ENCODE measurements at regions of chr2 and their contacts with region 1.

Region 1: DNA sequence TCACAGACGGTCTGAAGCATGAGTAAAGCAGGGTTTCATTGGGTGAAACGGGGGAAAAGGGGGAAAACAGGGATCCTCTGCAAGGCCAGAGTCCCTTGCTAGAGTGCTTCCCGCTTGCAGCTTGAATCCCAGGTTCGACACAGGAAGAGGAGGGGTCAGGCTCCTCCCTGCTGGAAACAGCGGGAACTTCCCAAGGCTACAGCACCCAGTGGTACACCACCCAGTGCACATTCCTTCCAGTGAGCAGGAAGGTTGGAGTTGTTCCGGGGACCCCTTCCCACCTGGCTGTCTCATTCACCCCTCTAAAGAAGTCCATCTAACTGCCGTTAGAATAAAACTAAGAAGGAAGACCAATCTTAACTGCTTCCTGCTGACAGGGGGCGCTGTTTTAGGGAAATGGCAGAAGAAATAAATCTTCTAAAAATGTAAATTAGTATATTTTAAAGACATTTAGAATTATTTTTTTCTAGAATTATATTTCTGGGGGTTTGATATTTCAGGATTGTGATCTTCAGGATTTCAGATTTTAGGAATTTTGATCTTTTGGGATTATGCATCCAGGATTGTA is 230.9 kb downstream of the RBM43 start:
- DNase-seq: peak; percentile 19
- ATAC-seq: no peak
- H3K4me3 Mint-ChIP-seq: no peak overlapping the region
- H3K27ac Mint-ChIP-seq: no peak overlapping the region
- H3K4me1 Mint-ChIP-seq: peaks cover 4% of the 10 kb centered on the region
- H3K27me3 Mint-ChIP-seq: peaks cover 11% of the 10 kb centered on the region
- CTCF ChIP-seq: peak; percentile 54

Region 2: GRCh38 chr2:150938527-150938926 is 92.2 kb before region 1 on chr2:
- CTCF ChIA-PET with region 1: no interaction called
- POLR2A ChIA-PET with region 1: no interaction called
- intact Hi-C with region 1: no loop called
- DNase-seq: no peak
- ATAC-seq: no peak
- H3K4me3 Mint-ChIP-seq: no peak overlapping the region
- H3K27ac Mint-ChIP-seq: no peak overlapping the region
- H3K4me1 Mint-ChIP-seq: no peaks in the 10 kb centered on the region
- H3K27me3 Mint-ChIP-seq: peaks cover 1% of the 10 kb centered on the region
- CTCF ChIP-seq: no peak

Region 3: GRCh38 chr2:151051574-151052220 is 20.9 kb after region 1 on chr2:
- CTCF ChIA-PET with region 1: interaction called, 10 read pairs
- POLR2A ChIA-PET with region 1: no interaction called
- intact Hi-C with region 1: no loop called
- DNase-seq: peak; percentile 50
- ATAC-seq: peak; percentile 85
- H3K4me3 Mint-ChIP-seq: no peak overlapping the region
- H3K27ac Mint-ChIP-seq: no peak overlapping the region
- H3K4me1 Mint-ChIP-seq: no peaks in the 10 kb centered on the region
- H3K27me3 Mint-ChIP-seq: peaks cover 7% of the 10 kb centered on the region
- CTCF ChIP-seq: peak; percentile 78

Region 4: DNA sequence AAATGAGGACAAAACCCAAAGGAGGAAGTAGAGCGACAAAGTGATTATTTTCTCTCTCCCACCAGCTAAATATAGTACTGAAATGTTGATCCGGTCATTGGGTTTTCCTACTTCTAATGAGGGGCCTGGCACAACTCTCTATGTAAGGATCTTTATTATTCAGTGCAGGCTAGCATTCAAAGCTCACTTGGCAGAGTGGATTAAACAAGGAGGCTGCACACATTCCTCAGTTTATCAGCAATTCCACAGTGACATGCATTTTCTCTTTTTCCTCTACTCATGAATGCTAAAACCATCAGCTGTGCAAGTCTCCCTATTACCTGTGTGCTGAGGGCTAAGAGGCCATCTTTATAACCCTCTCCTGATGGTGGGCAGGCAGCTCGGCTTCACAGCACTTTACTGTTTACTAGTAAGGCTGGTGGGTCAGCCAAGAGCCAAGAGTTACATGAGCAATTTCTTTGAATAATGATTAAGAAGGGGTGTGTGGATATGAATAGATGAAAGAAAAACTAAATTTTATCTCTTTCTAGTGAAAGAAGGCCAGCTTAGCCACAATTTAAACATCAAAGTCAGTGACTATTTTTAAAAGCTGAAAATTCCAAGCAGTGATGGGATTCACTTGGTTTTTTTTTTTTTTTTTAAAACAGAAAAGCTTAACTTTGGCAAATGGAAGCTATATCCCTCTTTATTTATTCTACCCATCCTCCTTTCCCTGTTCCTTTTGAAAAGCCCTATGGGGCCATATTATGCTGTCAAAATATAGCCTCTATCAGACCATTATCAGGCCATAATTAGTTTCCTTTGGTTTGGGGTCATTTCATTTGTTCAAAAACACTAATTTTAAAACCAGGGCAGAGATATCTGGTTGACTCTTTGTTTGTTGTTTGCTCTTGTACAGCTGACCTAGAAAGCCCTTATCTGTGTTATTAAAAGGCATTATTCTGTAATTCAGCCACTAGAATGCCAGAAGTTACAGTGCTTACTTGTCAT is 119.9 kb after region 1 on chr2:
- CTCF ChIA-PET with region 1: no interaction called
- POLR2A ChIA-PET with region 1: no interaction called
- intact Hi-C with region 1: no loop called
- DNase-seq: no peak
- ATAC-seq: no peak
- H3K4me3 Mint-ChIP-seq: no peak overlapping the region
- H3K27ac Mint-ChIP-seq: no peak overlapping the region
- H3K4me1 Mint-ChIP-seq: no peaks in the 10 kb centered on the region
- H3K27me3 Mint-ChIP-seq: peaks cover 22% of the 10 kb centered on the region
- CTCF ChIP-seq: no peak

Measured in activated CD8-positive, alpha-beta T cell treated with anti-CD3 and anti-CD28 coated beads for 36 hours (primary cell).